ENCODE measurements at regions of chr6 and their contacts with region 1.

Region 1: DNA sequence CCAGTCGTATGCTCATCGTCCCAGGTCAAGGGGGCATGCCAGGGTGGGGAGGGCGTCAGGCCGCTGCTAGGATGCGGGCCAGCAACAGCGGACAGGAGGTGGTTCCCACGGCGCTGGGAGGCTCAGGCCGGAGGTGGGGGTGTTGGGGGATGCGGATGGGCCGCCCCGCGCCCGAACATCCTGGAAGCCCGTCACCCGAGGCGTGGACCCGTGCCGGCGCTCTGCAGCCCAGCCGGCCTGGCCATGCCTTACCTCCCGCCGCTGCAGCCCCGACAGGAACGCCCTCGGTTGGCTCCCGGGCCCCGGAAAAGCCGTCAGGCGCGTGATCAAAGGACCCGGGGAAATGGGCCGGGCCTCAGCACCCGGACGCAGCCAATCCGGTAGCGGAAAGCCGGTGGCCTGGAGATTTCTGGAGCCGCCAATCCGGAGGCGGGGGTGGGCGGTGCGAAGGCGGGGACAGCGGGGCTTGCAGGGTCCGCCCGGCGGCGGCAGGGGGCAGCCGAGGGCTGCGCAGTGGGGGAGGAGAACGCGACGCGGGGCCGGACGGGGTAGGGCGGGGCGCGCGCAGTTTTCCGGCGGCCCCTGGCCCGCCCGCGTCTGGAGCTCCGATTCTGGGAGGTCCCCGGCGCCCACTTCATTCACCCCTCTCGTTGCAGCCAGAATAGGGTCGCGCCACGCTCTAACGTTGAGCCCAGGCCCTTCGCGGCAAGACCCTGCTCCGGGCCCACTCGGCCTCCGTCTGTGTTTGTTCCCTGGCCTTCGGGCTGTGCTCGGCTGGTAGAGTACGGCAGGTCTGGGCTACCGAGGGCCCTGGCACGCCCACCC is at the start of gene SMIM29:
- DNase-seq: peak; percentile 98
- ATAC-seq: peak; percentile 90
- H3K4me3 Mint-ChIP-seq: peak within 1 kb of the TSS; percentile 95
- H3K27ac Mint-ChIP-seq: peak within 1 kb of the TSS; percentile 96
- H3K4me1 Mint-ChIP-seq: peaks cover 53% of the 10 kb centered on the region
- H3K27me3 Mint-ChIP-seq: no peaks in the 10 kb centered on the region
- CTCF ChIP-seq: no peak
- total RNA-seq, gene SMIM29: 25.8 and 27.7 TPM in 2 replicates

Region 2: DNA sequence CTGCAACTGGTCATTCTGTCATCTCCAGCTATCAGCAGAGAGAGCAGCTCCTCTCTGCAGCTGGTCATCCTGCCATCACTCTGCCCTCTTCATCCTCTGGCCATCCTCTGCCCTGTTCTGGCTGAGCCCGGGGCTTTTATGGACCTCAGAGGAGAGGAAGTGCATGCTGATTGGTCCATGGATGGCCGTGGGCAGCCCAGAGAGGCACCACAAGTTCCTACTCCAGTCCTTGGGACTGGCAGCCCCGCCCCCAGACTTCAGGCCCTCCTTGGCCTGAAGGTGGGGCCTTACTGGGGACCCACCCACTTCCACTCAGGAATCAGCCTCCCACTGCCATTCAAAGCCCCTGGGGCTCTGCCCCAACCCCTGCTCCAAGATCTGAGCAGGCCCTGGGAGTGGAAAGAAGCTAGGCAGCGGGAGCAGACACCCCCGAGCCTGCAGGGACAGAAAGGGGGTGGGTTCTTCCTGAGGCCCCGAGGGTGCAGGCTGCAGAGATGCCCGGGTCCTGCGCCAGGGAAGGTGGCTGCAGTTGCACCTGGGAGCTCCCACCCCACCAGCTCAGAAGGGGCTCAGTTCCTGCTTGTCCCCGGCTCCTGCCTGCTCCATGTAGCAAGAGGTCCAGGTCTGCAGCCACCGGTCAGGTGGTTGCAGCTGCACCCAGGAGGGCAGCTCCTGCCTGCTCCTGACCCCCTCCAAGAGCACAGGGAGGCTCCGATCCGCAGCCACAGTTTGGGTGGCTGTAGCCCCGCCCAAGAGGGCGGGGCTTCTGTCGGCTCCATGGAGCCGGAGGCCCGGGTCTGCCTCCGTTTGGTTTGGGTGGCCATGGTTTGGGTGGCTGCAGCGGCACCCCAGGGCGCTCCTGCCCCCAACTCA is 46.4 kb before region 1 on chr6:
- CTCF ChIA-PET with region 1: interaction called, 3 read pairs
- POLR2A ChIA-PET with region 1: interaction called, 13 read pairs
- intact Hi-C with region 1: no loop called
- DNase-seq: no peak
- ATAC-seq: no peak
- H3K4me3 Mint-ChIP-seq: no peak overlapping the region
- H3K27ac Mint-ChIP-seq: no peak overlapping the region
- H3K4me1 Mint-ChIP-seq: no peaks in the 10 kb centered on the region
- H3K27me3 Mint-ChIP-seq: no peaks in the 10 kb centered on the region
- CTCF ChIP-seq: no peak

Region 3: DNA sequence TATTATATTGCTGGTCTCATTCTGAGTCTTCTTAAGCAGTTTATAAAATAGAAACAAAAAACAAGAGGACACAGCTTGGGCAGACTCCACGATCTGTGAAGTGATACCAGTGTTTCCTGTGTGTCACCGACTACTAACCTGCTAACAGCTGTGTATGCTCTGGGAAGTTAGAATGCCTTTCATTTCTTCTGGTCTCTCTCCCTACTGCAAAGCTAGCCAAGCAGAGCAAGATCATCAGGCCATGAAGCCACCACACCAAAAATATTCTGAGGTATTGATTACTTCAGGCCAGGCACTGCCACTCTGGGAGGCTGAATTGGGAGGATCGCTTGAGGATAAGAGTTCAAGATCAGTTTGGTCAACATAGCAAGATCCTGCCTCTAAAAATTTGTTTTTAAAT is 46.8 kb after region 1 on chr6:
- CTCF ChIA-PET with region 1: interaction called, 3 read pairs
- POLR2A ChIA-PET with region 1: interaction called, 3 read pairs
- intact Hi-C with region 1: loop called (anchors 5 kb)
- DNase-seq: no peak
- ATAC-seq: peak; percentile 90
- H3K4me3 Mint-ChIP-seq: peak overlapping the region; percentile 52
- H3K27ac Mint-ChIP-seq: peak overlapping the region; percentile 94
- H3K4me1 Mint-ChIP-seq: peaks cover 66% of the 10 kb centered on the region
- H3K27me3 Mint-ChIP-seq: no peaks in the 10 kb centered on the region
- CTCF ChIP-seq: no peak

Region 4: GRCh38 chr6:34414999-34415858 is 166.3 kb after region 1 on chr6:
- CTCF ChIA-PET with region 1: interaction called, 168 read pairs
- POLR2A ChIA-PET with region 1: interaction called, 68 read pairs
- intact Hi-C with region 1: loop called (anchors 1 kb)
- DNase-seq: no peak
- ATAC-seq: peak; percentile 83
- H3K4me3 Mint-ChIP-seq: no peak overlapping the region
- H3K27ac Mint-ChIP-seq: no peak overlapping the region
- H3K4me1 Mint-ChIP-seq: peaks cover 6% of the 10 kb centered on the region
- H3K27me3 Mint-ChIP-seq: no peaks in the 10 kb centered on the region
- CTCF ChIP-seq: no peak

Region 5: DNA sequence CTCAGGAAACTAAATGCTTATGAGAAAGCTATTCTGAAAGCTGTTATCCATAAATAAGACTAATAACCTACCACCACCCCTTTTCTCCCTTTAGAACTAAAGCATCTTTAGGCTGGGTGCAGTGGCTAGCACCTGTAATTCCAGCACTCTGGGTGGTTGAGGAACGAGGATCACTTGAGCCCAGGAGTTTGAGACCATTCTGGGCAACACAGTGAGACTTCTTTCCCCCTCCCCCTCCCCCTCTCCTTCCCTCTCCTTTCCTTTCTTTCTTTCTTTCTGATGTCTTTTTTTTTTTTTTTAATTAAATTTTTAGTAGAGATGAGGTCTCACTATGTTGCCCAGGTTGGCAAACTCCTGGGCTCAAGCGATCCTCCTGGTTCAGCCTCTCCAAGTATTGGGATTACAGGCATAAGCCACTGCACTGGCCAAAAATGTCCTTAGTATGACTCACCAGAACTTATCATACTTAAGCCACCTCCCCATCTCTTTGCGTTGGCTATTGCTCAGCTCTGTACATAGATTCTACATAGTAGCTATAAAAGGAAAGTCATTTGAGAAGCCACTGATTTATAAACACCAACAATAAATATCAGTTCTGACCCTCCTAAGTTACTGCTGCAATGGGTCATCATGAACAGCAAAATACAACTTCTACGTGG is 362.0 kb after region 1 on chr6:
- CTCF ChIA-PET with region 1: interaction called, 33 read pairs
- POLR2A ChIA-PET with region 1: interaction called, 12 read pairs
- intact Hi-C with region 1: loop called (anchors 1 kb)
- DNase-seq: no peak
- ATAC-seq: no peak
- H3K4me3 Mint-ChIP-seq: no peak overlapping the region
- H3K27ac Mint-ChIP-seq: no peak overlapping the region
- H3K4me1 Mint-ChIP-seq: peaks cover 9% of the 10 kb centered on the region
- H3K27me3 Mint-ChIP-seq: no peaks in the 10 kb centered on the region
- CTCF ChIP-seq: no peak